Activated B cell treated with CpG ODN at 0.5 μM for 24 hours (primary cell): ENCODE measurements at regions of chr14 and their contacts with region 1.

Region 1: GRCh38 chr14:73759714-73760597 is 45.8 kb upstream of the PNMA1 start:
- DNase-seq: peak; percentile 95
- ATAC-seq: peak; percentile 64
- H3K4me3 Mint-ChIP-seq: peak overlapping the region; percentile 89
- H3K27ac Mint-ChIP-seq: peak overlapping the region; percentile 99
- H3K4me1 Mint-ChIP-seq: peaks cover 86% of the 10 kb centered on the region
- H3K27me3 Mint-ChIP-seq: no peaks in the 10 kb centered on the region
- CTCF ChIP-seq: no peak

Region 2: GRCh38 chr14:73680821-73681220 is 79.1 kb before region 1 on chr14:
- CTCF ChIA-PET with region 1: no interaction called
- POLR2A ChIA-PET with region 1: no interaction called
- intact Hi-C with region 1: no loop called
- DNase-seq: no peak
- ATAC-seq: no peak
- H3K4me3 Mint-ChIP-seq: no peak overlapping the region
- H3K27ac Mint-ChIP-seq: no peak overlapping the region
- H3K4me1 Mint-ChIP-seq: no peaks in the 10 kb centered on the region
- H3K27me3 Mint-ChIP-seq: no peaks in the 10 kb centered on the region
- CTCF ChIP-seq: no peak

Region 3: DNA sequence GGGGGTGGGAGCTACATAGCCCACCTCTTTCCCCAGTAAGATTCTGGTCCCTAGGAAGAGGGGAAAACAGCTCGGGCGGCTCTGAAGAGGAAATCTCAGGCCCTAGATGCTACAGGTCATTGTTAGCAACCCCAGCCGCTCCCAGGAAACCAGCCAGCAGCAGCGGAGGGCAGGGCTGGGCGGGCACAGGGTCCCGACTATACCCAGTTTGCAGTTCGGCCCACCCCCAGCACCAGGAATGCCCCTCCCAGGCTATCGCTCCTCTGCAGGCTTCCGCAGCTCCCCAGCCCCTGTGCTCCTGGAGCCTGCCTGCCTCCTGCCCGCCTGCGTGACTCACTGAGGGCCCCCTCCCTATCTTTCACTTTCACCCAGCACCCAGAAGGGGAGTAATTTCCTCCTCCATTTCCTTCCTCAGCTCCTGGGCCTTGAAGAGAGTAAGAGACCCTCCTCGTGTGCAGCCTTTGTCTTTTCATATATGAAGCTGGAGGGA is 18.5 kb before region 1 on chr14:
- CTCF ChIA-PET with region 1: interaction called, 11 read pairs
- POLR2A ChIA-PET with region 1: interaction called, 183 read pairs
- intact Hi-C with region 1: loop called (anchors 2 kb)
- DNase-seq: no peak
- ATAC-seq: peak; percentile 72
- H3K4me3 Mint-ChIP-seq: peak overlapping the region; percentile 76
- H3K27ac Mint-ChIP-seq: peak overlapping the region; percentile 91
- H3K4me1 Mint-ChIP-seq: peaks cover 67% of the 10 kb centered on the region
- H3K27me3 Mint-ChIP-seq: no peaks in the 10 kb centered on the region
- CTCF ChIP-seq: no peak

Region 4: GRCh38 chr14:73777401-73777800 is 17.4 kb after region 1 on chr14:
- CTCF ChIA-PET with region 1: interaction called, 39 read pairs
- POLR2A ChIA-PET with region 1: interaction called, 493 read pairs
- intact Hi-C with region 1: no loop called
- DNase-seq: no peak
- ATAC-seq: peak; percentile 80
- H3K4me3 Mint-ChIP-seq: peak overlapping the region; percentile 12
- H3K27ac Mint-ChIP-seq: peak overlapping the region; percentile 67
- H3K4me1 Mint-ChIP-seq: peaks cover 69% of the 10 kb centered on the region
- H3K27me3 Mint-ChIP-seq: no peaks in the 10 kb centered on the region
- CTCF ChIP-seq: no peak

Region 5: DNA sequence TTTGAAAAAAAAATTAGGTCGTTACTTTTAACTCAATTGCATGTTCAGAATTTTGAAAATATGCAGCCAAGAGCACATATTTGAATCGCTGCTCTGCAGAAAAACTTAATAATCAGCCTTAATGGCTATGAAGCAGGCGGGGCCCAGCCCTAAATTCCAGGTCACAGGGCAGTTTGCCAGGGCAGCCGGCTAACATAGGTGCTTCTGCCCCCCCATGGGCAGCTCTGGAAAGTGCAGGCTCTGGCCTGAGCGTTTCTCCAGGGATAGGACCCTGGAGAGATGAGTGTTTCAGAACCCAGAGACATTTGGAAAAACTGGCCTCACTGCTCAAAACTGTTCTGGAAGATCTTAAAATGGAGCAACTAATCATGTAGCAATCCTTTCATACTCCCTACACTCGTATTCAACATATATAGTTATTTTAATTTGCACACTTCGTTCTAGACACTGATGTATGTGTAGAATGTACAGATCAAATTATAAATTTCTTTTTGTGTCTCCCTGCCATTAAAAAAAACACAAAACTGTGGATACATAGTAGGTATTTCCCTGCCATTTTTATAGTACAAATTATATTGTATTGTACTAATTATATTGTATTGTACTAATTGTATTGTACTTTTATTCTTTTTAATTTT is 65.7 kb after region 1 on chr14:
- CTCF ChIA-PET with region 1: interaction called, 3 read pairs
- POLR2A ChIA-PET with region 1: interaction called, 4 read pairs
- intact Hi-C with region 1: loop called (anchors 1 kb)
- DNase-seq: peak; percentile 61
- ATAC-seq: peak; percentile 99
- H3K4me3 Mint-ChIP-seq: no peak overlapping the region
- H3K27ac Mint-ChIP-seq: no peak overlapping the region
- H3K4me1 Mint-ChIP-seq: peaks cover 6% of the 10 kb centered on the region
- H3K27me3 Mint-ChIP-seq: no peaks in the 10 kb centered on the region
- CTCF ChIP-seq: peak; percentile 96

Region 6: GRCh38 chr14:75278422-75279161 is 1518.6 kb after region 1 on chr14 and contains the start of gene FOS:
- CTCF ChIA-PET with region 1: no interaction called
- POLR2A ChIA-PET with region 1: no interaction called
- intact Hi-C with region 1: loop called (anchors 5 kb)
- DNase-seq: peak; percentile 88
- ATAC-seq: peak; percentile 70
- H3K4me3 Mint-ChIP-seq: peak within 1 kb of the TSS; percentile 94
- H3K27ac Mint-ChIP-seq: peak within 1 kb of the TSS; percentile 94
- H3K4me1 Mint-ChIP-seq: peaks cover 64% of the 10 kb centered on the region
- H3K27me3 Mint-ChIP-seq: peaks cover 18% of the 10 kb centered on the region
- CTCF ChIP-seq: no peak
- total RNA-seq, gene FOS: 27.1 and 37.8 TPM in 2 replicates